ENCODE measurements at regions of chr2 and their contacts with region 1.

Region 1: GRCh38 chr2:157492189-157492773 is 48.4 kb upstream of the CYTIP start:
- DNase-seq: peak; percentile 36
- ATAC-seq: peak; percentile 99
- H3K4me3 Mint-ChIP-seq: no peak overlapping the region
- H3K27ac Mint-ChIP-seq: peak overlapping the region; percentile 50
- H3K4me1 Mint-ChIP-seq: peaks cover 20% of the 10 kb centered on the region
- H3K27me3 Mint-ChIP-seq: no peaks in the 10 kb centered on the region
- CTCF ChIP-seq: peak; percentile 58

Region 2: DNA sequence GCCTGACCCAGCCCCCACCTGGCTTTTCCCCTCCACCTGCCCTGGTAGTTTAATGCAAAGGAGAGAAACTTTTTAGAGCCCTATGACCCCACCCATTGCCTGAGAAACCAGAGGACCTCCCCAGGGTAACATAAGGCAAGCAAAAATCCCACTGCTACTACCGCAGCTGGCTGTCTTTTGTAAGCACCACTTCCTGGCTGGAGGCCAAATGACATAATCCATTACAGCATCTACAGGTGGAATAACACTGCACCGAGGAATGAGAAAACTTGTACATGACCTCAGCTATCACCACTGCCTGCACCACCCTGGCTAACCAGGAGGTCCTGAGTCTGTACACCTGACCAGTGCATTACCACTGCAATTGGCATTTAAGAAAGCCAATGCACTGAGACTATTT is 384.4 kb before region 1 on chr2:
- CTCF ChIA-PET with region 1: no interaction called
- POLR2A ChIA-PET with region 1: no interaction called
- intact Hi-C with region 1: no loop called
- DNase-seq: no peak
- ATAC-seq: no peak
- H3K4me3 Mint-ChIP-seq: no peak overlapping the region
- H3K27ac Mint-ChIP-seq: no peak overlapping the region
- H3K4me1 Mint-ChIP-seq: no peaks in the 10 kb centered on the region
- H3K27me3 Mint-ChIP-seq: no peaks in the 10 kb centered on the region
- CTCF ChIP-seq: no peak

Region 3: GRCh38 chr2:157302492-157303099 is 189.7 kb before region 1 on chr2:
- CTCF ChIA-PET with region 1: interaction called, 44 read pairs
- POLR2A ChIA-PET with region 1: no interaction called
- intact Hi-C with region 1: loop called (anchors 1 kb)
- DNase-seq: no peak
- ATAC-seq: peak; percentile 69
- H3K4me3 Mint-ChIP-seq: no peak overlapping the region
- H3K27ac Mint-ChIP-seq: no peak overlapping the region
- H3K4me1 Mint-ChIP-seq: peaks cover 6% of the 10 kb centered on the region
- H3K27me3 Mint-ChIP-seq: peaks cover 13% of the 10 kb centered on the region
- CTCF ChIP-seq: peak; percentile 53

Region 4: GRCh38 chr2:157468931-157469708 is 23.2 kb before region 1 on chr2:
- CTCF ChIA-PET with region 1: interaction called, 11 read pairs
- POLR2A ChIA-PET with region 1: interaction called, 4 read pairs
- intact Hi-C with region 1: loop called (anchors 1 kb)
- DNase-seq: no peak
- ATAC-seq: peak; percentile 81
- H3K4me3 Mint-ChIP-seq: peak overlapping the region; percentile 81
- H3K27ac Mint-ChIP-seq: peak overlapping the region; percentile 99
- H3K4me1 Mint-ChIP-seq: peaks cover 87% of the 10 kb centered on the region
- H3K27me3 Mint-ChIP-seq: no peaks in the 10 kb centered on the region
- CTCF ChIP-seq: no peak

Region 5: DNA sequence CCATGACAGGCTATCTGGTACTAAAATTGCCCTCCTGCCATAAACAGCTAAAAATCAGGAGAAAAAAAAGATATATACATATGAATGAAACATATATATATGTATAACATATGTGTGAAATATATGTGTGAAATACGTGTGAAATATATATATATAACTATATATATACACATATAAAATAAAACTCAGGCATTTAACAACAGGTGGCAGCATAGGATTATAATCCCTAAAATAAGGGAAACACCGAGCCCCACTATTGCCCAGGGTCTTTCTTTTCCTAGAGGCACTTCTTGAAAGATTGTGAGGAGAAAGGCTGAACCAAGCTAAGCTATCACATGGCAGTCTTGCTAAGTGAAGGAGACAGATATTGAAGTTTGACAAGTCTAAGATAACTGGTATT is 17.5 kb after region 1 on chr2:
- CTCF ChIA-PET with region 1: interaction called, 12 read pairs
- POLR2A ChIA-PET with region 1: interaction called, 3 read pairs
- intact Hi-C with region 1: loop called (anchors 1 kb)
- DNase-seq: no peak
- ATAC-seq: no peak
- H3K4me3 Mint-ChIP-seq: no peak overlapping the region
- H3K27ac Mint-ChIP-seq: no peak overlapping the region
- H3K4me1 Mint-ChIP-seq: peaks cover 6% of the 10 kb centered on the region
- H3K27me3 Mint-ChIP-seq: peaks cover 10% of the 10 kb centered on the region
- CTCF ChIP-seq: no peak

Region 6: DNA sequence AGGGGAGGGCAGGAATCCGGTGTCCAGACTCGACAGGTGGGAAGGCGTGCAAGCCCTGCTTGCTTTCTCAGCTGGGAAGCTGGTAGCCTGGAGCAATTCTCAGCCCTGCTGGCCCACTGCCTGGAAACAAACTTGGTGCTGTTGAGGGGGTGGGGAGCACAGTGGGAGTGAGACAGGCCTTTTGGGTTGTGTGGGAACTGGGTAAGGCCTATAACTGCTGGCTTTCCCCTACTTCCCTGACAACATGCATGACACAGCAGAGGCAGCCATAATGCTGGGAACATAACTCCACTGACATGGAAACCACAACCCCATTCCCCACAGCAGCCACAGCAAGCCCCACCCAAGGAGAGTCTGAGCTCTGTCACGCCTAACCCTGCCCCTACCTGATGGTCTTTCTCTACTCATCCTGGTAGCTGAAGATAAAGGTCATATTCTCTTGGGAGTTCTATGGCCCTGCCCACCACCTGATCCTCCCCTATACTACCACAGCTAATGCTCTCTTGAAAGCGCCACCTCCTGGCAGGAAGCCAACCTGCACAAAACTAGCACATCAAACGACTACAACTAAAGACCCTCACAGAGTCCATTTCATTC is 259.3 kb after region 1 on chr2:
- CTCF ChIA-PET with region 1: interaction called, 4 read pairs
- POLR2A ChIA-PET with region 1: no interaction called
- intact Hi-C with region 1: loop called (anchors 2 kb)
- DNase-seq: no peak
- ATAC-seq: peak; percentile 18
- H3K4me3 Mint-ChIP-seq: no peak overlapping the region
- H3K27ac Mint-ChIP-seq: no peak overlapping the region
- H3K4me1 Mint-ChIP-seq: peaks cover 4% of the 10 kb centered on the region
- H3K27me3 Mint-ChIP-seq: no peaks in the 10 kb centered on the region
- CTCF ChIP-seq: no peak

Region 7: GRCh38 chr2:158006961-158007719 is 514.9 kb after region 1 on chr2:
- CTCF ChIA-PET with region 1: interaction called, 4 read pairs
- POLR2A ChIA-PET with region 1: no interaction called
- intact Hi-C with region 1: loop called (anchors 1 kb)
- DNase-seq: no peak
- ATAC-seq: no peak
- H3K4me3 Mint-ChIP-seq: no peak overlapping the region
- H3K27ac Mint-ChIP-seq: no peak overlapping the region
- H3K4me1 Mint-ChIP-seq: peaks cover 5% of the 10 kb centered on the region
- H3K27me3 Mint-ChIP-seq: peaks cover 5% of the 10 kb centered on the region
- CTCF ChIP-seq: no peak

Region 8: DNA sequence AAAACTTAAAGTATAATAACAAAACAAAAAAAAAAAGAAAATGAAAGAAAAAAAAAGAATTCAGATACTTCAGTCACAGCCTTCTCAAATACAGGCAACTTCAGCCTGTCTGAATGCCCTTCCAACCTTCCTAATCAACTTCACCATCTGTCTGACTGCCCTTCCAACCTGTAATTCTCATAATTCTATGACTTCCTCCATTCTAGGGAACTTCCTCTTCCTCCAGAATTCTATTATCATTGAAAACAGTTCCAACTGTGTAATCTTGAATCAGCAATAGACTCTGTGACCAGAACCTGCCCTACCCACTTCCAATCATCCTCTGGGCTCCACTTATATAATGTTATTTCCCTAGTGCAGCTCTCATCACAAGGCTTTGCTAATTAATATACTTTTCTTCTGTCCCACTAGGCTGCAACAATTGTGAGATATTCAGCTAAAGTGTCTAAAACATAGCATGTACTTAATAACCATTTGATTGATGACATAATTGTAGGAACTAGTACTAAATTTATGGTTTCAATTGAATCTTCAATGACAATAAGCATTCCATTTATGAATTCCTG is 736.7 kb after region 1 on chr2:
- CTCF ChIA-PET with region 1: no interaction called
- POLR2A ChIA-PET with region 1: no interaction called
- intact Hi-C with region 1: no loop called
- DNase-seq: no peak
- ATAC-seq: no peak
- H3K4me3 Mint-ChIP-seq: no peak overlapping the region
- H3K27ac Mint-ChIP-seq: no peak overlapping the region
- H3K4me1 Mint-ChIP-seq: no peaks in the 10 kb centered on the region
- H3K27me3 Mint-ChIP-seq: no peaks in the 10 kb centered on the region
- CTCF ChIP-seq: no peak

Measured in activated B cell treated with CpG ODN at 0.5 μM for 24 hours (primary cell).